AG04450 (cell line): ENCODE measurements at regions of chr4 and their contacts with region 1.

Region 1: GRCh38 chr4:139126898-139127297 is 50.1 kb downstream of the ELF2 start:
- DNase-seq: no peak
- H3K4me3 ChIP-seq: no peak overlapping the region
- H3K27ac ChIP-seq: no peak overlapping the region
- H3K27me3 ChIP-seq: no peaks in the 10 kb centered on the region
- CTCF ChIP-seq: no peak

Region 2: DNA sequence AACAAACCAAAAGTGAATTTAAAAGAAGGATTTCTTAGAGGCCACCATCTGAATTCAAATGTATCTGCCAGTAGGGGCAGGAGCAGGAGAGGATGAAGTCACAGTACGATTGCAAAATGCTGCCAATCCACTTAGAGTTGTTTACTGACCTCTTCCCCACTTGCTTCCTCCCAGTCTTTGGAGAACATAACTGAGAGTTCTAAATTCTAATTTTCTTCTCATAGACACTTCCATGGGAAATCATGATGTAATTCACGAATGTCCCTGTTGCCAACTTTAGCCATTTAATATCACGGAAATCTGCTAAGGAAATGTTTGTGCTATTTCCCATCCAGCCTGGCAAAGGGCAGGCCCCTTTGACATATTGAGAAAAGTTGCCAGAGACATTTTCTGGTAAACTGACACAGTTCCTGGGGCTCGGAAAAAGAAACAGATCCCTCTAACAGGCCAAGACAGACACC is 144.9 kb before region 1 on chr4:
- CTCF ChIA-PET with region 1: no interaction called
- POLR2A ChIA-PET with region 1: no interaction called
- DNase-seq: peak; percentile 13
- H3K4me3 ChIP-seq: no peak overlapping the region
- H3K27ac ChIP-seq: no peak overlapping the region
- H3K27me3 ChIP-seq: peaks cover 2% of the 10 kb centered on the region
- CTCF ChIP-seq: peak; percentile 51

Region 3: GRCh38 chr4:139319571-139319970 is 192.7 kb after region 1 on chr4:
- CTCF ChIA-PET with region 1: interaction called, 11 read pairs
- POLR2A ChIA-PET with region 1: no interaction called
- DNase-seq: no peak
- H3K4me3 ChIP-seq: no peak overlapping the region
- H3K27ac ChIP-seq: no peak overlapping the region
- H3K27me3 ChIP-seq: no peaks in the 10 kb centered on the region
- CTCF ChIP-seq: no peak